Spleen (tissue), 13 donors: ENCODE measurements at regions of chr5 and their contacts with region 1.

Region 1: GRCh38 chr5:148849461-148849860 is 23.1 kb downstream of the ADRB2 start:
- DNase-seq: no peak
- H3K4me3 ChIP-seq: no peak overlapping the region
- H3K27ac ChIP-seq: peak overlapping the region in 6 of 8 donors; percentile 16 to 82 (median 67)
- H3K4me1 ChIP-seq: peaks cover 11 to 71% (median 37%) of the 10 kb centered on the region in 6 donors
- H3K27me3 ChIP-seq: no peaks in the 10 kb centered on the region
- CTCF ChIP-seq: no peak
- POLR2A ChIP-seq: no peak

Region 2: DNA sequence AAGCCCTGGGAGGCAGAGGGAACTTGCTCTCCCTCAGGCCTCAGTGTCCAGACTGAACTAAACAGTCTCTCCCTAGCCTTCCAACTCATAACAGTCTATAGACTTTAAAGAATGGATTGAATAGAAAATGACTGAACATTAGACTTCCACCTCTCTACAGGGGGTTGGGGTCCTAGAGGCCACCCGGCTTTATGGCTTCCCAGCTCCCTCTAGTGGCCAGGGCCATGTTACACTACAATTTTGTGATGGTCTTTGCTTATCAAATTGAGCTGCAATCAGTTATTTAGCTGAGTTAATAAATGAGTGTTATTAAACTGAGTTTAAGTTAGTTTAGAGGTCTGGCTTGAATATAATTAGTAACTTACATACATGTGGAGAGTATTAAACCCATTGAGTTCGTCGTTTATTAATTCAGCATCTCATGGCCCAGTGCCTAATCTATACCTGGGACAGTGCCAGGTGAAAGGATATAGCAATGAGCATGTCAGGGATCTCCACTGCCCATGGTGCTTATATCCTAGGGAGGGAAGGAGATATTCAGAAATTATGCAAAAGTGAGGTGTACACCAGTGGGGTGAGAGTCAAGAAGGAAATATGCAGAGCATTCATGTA is 108.2 kb after region 1 on chr5:
- intact Hi-C with region 1: loop called (anchors 10 kb)
- DNase-seq: peak; percentile 79
- H3K4me3 ChIP-seq: no peak overlapping the region
- H3K27ac ChIP-seq: no peak overlapping the region
- H3K4me1 ChIP-seq: peaks cover 0 to 26% (median 8%) of the 10 kb centered on the region in 6 donors
- H3K27me3 ChIP-seq: no peaks in the 10 kb centered on the region
- CTCF ChIP-seq: peak in 10 of 11 experiments; percentile 55 to 80 (median 76)
- POLR2A ChIP-seq: no peak

Region 3: GRCh38 chr5:149114403-149115312 is 265.2 kb after region 1 on chr5:
- intact Hi-C with region 1: no loop called
- DNase-seq: no peak
- H3K4me3 ChIP-seq: no peak overlapping the region
- H3K27ac ChIP-seq: no peak overlapping the region
- H3K4me1 ChIP-seq: peaks cover 0 to 9% (median 5%) of the 10 kb centered on the region in 6 donors
- H3K27me3 ChIP-seq: peaks cover 0 to 10% (median 0%) of the 10 kb centered on the region in 7 donors
- CTCF ChIP-seq: peak; percentile 33 to 81 (median 63)
- POLR2A ChIP-seq: no peak

Region 4: GRCh38 chr5:149268928-149269557 is 419.6 kb after region 1 on chr5:
- intact Hi-C with region 1: no loop called
- DNase-seq: no peak
- H3K4me3 ChIP-seq: no peak overlapping the region
- H3K27ac ChIP-seq: no peak overlapping the region
- H3K4me1 ChIP-seq: peaks cover 0 to 36% (median 22%) of the 10 kb centered on the region in 6 donors
- H3K27me3 ChIP-seq: peaks cover 0 to 44% (median 11%) of the 10 kb centered on the region in 7 donors
- CTCF ChIP-seq: peak; percentile 40 to 79 (median 70)
- POLR2A ChIP-seq: no peak